Natural killer cell (primary cell): ENCODE measurements at regions of chr9 and their contacts with region 1.

Region 1: DNA sequence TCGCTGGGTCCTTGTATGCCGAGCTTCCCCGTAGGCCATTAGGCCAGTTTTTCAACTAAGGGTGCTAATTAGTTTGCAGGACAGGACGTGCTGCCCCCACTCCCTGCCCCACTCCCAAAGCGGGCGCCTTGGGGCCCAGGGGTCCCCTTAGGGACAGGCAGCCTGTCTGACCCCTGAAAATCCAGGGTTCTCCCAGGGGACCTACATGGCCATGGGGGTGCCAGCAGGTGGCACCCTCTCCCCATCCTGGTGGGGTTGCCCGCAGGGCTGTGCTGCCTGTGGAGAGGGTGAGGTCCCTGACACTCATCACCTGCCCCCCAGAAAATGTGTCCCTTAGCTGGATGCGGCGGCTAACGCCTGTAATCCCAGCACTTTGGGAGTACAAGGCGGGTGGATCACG is 8.5 kb upstream of the CCDC187 start:
- DNase-seq: peak in 1 of 2 donors; percentile 67
- ATAC-seq: no peak
- H3K4me3 ChIP-seq: no peak overlapping the region
- H3K4me3 Mint-ChIP-seq: no peak overlapping the region
- H3K27ac ChIP-seq: no peak overlapping the region
- H3K27ac Mint-ChIP-seq: no peak overlapping the region
- H3K4me1 ChIP-seq: peaks cover 52% of the 10 kb centered on the region
- H3K4me1 Mint-ChIP-seq: peaks cover 31 to 32% of the 10 kb centered on the region in 2 donors
- H3K27me3 ChIP-seq: no peaks in the 10 kb centered on the region
- H3K27me3 Mint-ChIP-seq: peaks cover 0 to 8% of the 10 kb centered on the region in 2 donors
- CTCF ChIP-seq: no peak

Region 2: GRCh38 chr9:136363606-136364370 is 51.4 kb after region 1 on chr9 and contains the start of gene DNLZ:
- intact Hi-C with region 1: loop called (anchors 10 kb)
- DNase-seq: peak; percentile 85 to 94
- ATAC-seq: peak; percentile 83 to 94 (median 83)
- H3K4me3 ChIP-seq: peak within 1 kb of the TSS; percentile 78
- H3K4me3 Mint-ChIP-seq: peak within 1 kb of the TSS; percentile 84
- H3K27ac ChIP-seq: peak within 1 kb of the TSS; percentile 60
- H3K27ac Mint-ChIP-seq: peak within 1 kb of the TSS; percentile 48 to 66
- H3K4me1 ChIP-seq: peaks cover 29% of the 10 kb centered on the region
- H3K4me1 Mint-ChIP-seq: peaks cover 0 to 5% of the 10 kb centered on the region in 2 donors
- H3K27me3 ChIP-seq: no peaks in the 10 kb centered on the region
- H3K27me3 Mint-ChIP-seq: no peaks in the 10 kb centered on the region
- CTCF ChIP-seq: peak; percentile 97
- total RNA-seq, gene DNLZ: 24.6 to 34.8 (median 28.9) TPM

Region 3: DNA sequence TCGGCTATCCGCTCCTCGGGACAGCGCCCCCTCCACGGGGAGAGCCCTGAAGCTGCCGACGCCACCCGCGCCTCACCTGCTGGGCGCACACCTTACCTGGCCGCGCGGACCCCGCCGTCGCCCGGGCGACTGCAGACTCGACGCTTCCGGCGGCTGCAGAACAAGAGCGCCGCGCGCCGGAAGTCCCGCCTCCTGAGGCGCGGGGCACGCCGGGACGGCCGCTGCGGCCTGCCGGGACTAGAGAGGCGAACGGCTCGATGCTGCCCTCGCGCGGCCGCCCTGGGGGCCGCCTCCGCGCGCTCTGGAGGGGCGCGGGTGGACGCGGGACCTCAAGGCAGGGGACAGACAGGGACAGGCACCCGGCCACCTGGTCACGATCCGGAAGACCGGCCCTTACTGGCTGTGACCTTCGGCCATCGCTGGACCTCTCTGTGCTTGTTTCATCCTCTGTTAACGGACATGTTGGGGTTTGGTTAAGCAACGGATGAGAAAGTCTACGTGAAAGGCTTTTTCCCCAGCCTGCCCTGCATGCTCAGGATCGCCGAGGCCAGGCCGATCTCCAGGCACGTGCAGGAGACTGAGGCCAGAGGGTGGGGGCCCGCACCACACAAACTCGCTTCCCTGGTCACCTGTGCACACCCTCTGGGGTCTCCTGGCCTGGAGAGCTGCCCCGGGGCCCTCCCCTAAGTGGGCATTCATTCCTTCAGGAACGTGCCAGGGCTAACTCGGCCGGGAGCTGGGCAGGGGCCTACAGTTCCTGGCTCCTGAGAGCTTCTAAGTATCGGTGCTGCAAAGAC is 87.8 kb after region 1 on chr9 and contains the start of gene SNAPC4:
- intact Hi-C with region 1: loop called (anchors 10 kb)
- DNase-seq: peak; percentile 88 to 95
- ATAC-seq: peak; percentile 91 to 94 (median 91)
- H3K4me3 ChIP-seq: peak within 1 kb of the TSS; percentile 46
- H3K4me3 Mint-ChIP-seq: peak within 1 kb of the TSS; percentile 84
- H3K27ac ChIP-seq: peak within 1 kb of the TSS; percentile 37
- H3K27ac Mint-ChIP-seq: peak within 1 kb of the TSS; percentile 57 to 72
- H3K4me1 ChIP-seq: peaks cover 54% of the 10 kb centered on the region
- H3K4me1 Mint-ChIP-seq: peaks cover 23 to 30% of the 10 kb centered on the region in 2 donors
- H3K27me3 ChIP-seq: no peaks in the 10 kb centered on the region
- H3K27me3 Mint-ChIP-seq: no peaks in the 10 kb centered on the region
- CTCF ChIP-seq: peak; percentile 93
- total RNA-seq, gene SNAPC4: 9.0 to 11.3 (median 9.4) TPM

Region 4: DNA sequence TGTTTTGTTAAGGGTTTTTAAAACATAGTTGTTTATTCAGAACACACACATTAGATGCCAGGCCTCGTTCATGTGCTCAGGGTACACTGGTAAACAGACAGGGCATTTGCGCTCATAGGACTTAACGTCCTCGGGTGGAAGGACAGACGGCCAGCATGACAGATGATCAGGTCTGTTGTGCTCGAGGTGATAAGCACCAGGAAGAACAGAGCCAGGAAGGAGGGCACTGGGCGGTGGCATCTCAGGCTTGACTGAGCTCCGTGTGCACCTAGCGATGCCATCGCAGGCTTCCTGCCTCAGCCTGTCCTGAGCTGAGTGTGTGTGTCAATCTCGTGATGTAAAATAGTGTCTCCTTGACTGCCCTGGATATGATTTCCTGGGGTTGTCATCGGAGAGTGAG is 1402.9 kb after region 1 on chr9:
- intact Hi-C with region 1: loop called (anchors 10 kb)
- DNase-seq: no peak
- ATAC-seq: no peak
- H3K4me3 ChIP-seq: no peak overlapping the region
- H3K4me3 Mint-ChIP-seq: peak overlapping the region; percentile 76
- H3K27ac ChIP-seq: peak overlapping the region; percentile 55
- H3K27ac Mint-ChIP-seq: peak overlapping the region; percentile 89 to 94
- H3K4me1 ChIP-seq: peaks cover 21% of the 10 kb centered on the region
- H3K4me1 Mint-ChIP-seq: peaks cover 41 to 45% of the 10 kb centered on the region in 2 donors
- H3K27me3 ChIP-seq: no peaks in the 10 kb centered on the region
- H3K27me3 Mint-ChIP-seq: peaks cover 0 to 3% of the 10 kb centered on the region in 2 donors
- CTCF ChIP-seq: no peak